Transverse colon (tissue), 4 donors: ENCODE measurements at regions of chr17 and their contacts with region 1.

Region 1: GRCh38 chr17:1628856-1629646 is 417 bp upstream of the SLC43A2 start:
- DNase-seq: peak; percentile 95
- H3K4me3 ChIP-seq: peak overlapping the region; percentile 57 to 83 (median 71)
- H3K27ac ChIP-seq: peak overlapping the region; percentile 85 to 94 (median 92)
- H3K4me1 ChIP-seq: peaks cover 7 to 26% (median 22%) of the 10 kb centered on the region in 4 donors
- H3K27me3 ChIP-seq: no peaks in the 10 kb centered on the region
- CTCF ChIP-seq: peak in 3 of 5 experiments; percentile 10 to 46 (median 18)
- EP300 ChIP-seq: no peak
- POLR2A ChIP-seq: peak; percentile 15

Region 2: DNA sequence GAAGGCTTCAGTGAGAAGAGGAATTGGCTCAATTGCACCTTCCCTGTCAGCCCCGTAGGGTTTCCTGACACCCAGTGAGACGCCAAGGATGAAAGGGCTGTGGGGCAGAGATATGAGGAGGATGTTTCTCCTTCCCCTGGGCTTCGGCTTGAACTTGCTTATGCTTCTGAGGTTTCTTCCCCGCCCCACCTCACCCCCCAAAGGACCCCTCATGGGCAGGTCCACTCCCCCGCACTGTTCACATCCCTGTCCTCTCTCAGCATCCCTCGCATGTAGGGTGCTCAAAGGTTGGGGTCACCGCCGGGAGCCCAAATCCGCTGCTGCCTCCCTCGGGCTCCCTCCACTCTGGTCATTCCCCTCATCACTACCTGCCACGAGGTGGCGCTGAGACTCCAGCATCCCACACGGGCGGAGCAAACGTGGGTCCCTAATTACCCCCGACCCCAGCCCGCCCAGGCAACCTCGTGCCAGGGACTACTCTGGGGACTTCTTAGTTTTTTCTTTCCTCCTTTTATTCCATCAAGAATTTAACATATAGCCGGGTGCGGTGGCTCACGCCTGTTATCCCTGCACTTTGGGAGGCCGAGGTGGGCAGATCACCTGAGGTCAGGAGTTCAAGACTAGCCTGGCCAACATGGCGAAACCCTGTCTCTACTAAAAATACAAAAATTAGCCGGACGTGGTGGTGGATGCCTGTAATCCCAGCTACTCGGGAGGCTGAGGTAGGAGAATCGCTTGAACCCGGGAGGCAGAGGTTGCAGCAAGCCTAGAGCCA is 352.9 kb before region 1 on chr17:
- in situ Hi-C with region 1: no loop called
- intact Hi-C with region 1: loop called (anchors 10 kb)
- DNase-seq: peak; percentile 71
- H3K4me3 ChIP-seq: no peak overlapping the region
- H3K27ac ChIP-seq: no peak overlapping the region
- H3K4me1 ChIP-seq: no peaks in the 10 kb centered on the region
- H3K27me3 ChIP-seq: peaks cover 63% of the 10 kb centered on the region
- CTCF ChIP-seq: peak; percentile 63 to 91 (median 82)
- EP300 ChIP-seq: no peak
- POLR2A ChIP-seq: no peak

Region 3: DNA sequence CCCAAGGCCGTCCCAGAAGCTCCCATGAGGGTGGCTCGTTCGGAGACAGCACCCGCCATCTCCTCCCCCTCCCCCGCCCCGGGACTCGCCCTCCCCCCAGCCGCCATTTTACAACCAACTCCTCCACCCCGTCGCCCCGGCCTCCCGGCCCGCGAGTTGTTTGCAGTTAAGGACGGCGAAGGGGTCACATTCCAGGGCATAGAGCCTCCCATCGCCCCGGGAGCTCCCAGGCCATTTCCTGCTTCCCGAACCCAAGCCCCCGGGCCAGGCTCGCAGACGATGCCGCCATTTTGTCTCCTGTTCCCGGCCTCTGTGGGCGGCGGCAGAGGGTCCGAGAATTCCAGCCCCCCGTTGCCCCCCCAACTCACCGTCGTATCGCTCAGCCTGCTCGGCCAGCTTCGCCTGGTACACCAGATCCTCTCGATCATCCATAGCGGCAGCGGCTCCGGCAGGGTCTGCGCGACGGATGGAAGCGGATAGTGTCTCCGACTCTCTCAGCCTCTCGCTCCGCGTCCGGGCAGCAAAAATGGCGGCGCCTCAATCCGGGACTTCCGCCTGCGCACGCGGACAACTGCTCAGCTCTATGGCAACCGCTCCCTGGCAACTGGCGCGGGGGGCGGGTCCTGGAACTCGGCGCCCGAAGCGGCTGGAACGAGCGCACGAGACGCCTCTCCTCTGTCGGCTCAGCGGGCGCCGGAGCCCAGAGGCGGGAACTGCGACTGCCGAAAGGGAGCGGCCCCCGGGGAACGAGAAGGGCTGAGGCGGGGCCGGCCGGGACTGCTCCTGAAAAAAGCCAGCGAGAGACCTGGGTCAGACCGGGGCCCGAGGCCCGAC is 229.2 kb before region 1 on chr17 and contains the start of gene YWHAE:
- in situ Hi-C with region 1: no loop called
- intact Hi-C with region 1: no loop called
- DNase-seq: peak; percentile 98
- H3K4me3 ChIP-seq: peak within 1 kb of the TSS; percentile 68 to 80 (median 71)
- H3K27ac ChIP-seq: peak within 1 kb of the TSS; percentile 91 to 95 (median 94)
- H3K4me1 ChIP-seq: peaks cover 19 to 44% (median 40%) of the 10 kb centered on the region in 4 donors
- H3K27me3 ChIP-seq: no peaks in the 10 kb centered on the region
- CTCF ChIP-seq: no peak
- EP300 ChIP-seq: no peak
- POLR2A ChIP-seq: peak; percentile 91
- total RNA-seq, gene YWHAE: 158 to 2,397 (median 594) TPM

Region 4: DNA sequence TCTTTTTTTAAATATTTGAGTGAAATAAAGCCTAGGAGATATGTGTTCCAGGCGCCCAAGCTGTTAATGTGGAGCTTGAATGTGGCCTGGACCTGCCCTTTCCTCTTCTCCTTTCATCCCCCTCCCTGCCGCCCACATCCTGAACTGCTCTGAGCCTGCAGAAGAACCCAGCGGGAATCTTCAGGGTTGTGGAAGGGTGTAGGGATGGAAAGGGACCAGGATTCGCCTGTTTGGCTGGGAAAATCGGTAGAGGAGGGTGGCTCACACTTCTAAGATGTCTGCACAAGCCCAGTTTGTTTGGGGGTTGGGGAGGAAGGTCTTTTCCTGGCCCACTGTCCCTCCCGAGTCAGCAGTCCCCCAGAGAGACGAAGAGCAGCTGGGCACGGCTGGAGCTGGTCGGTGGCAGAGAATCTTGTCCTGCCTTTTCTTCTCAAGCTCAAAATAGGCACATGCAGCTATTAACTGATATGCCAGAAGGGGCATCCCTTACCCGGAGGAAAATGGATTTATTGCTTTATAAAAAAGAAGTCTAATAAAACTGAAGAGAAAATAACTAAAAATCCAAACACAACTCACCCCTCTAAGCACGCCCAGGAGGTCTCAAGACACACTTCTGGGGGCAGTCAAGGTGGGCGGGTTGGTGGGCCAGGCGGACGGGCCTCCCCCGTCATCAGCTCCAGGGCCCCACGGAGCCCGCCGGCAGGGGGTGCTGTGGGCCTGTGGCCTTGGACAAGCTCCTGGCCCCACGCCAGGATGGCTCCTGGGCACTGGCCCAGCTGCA is 54.9 kb before region 1 on chr17:
- in situ Hi-C with region 1: loop called in 3 of 4 experiments (anchors 5 to 10 kb)
- intact Hi-C with region 1: loop called (anchors 2 kb)
- DNase-seq: peak; percentile 89
- H3K4me3 ChIP-seq: no peak overlapping the region
- H3K27ac ChIP-seq: peak overlapping the region; percentile 46 to 83 (median 80)
- H3K4me1 ChIP-seq: peaks cover 13 to 44% (median 26%) of the 10 kb centered on the region in 4 donors
- H3K27me3 ChIP-seq: no peaks in the 10 kb centered on the region
- CTCF ChIP-seq: peak; percentile 94 to 97 (median 96)
- EP300 ChIP-seq: no peak
- POLR2A ChIP-seq: no peak

Region 5: GRCh38 chr17:1588801-1589456 is 40.1 kb before region 1 on chr17:
- in situ Hi-C with region 1: loop called in 1 of 4 experiments (anchors 10 kb)
- intact Hi-C with region 1: no loop called
- DNase-seq: no peak
- H3K4me3 ChIP-seq: no peak overlapping the region
- H3K27ac ChIP-seq: peak overlapping the region in 3 of 4 donors; percentile 62 to 76 (median 74)
- H3K4me1 ChIP-seq: peaks cover 25 to 46% (median 44%) of the 10 kb centered on the region in 4 donors
- H3K27me3 ChIP-seq: no peaks in the 10 kb centered on the region
- CTCF ChIP-seq: no peak
- EP300 ChIP-seq: no peak
- POLR2A ChIP-seq: no peak